ENCODE measurements at regions of chr12 and their contacts with region 1.

Region 1: GRCh38 chr12:93467351-93468007 is at the start of gene MRPL42:
- DNase-seq: peak; percentile 93
- ATAC-seq: peak; percentile 93
- H3K4me3 Mint-ChIP-seq: peak within 1 kb of the TSS; percentile 84
- H3K27ac Mint-ChIP-seq: peak within 1 kb of the TSS; percentile 87
- H3K4me1 Mint-ChIP-seq: peaks cover 25% of the 10 kb centered on the region
- H3K27me3 Mint-ChIP-seq: no peaks in the 10 kb centered on the region
- CTCF ChIP-seq: peak; percentile 68
- total RNA-seq, gene MRPL42: 85.6 to 87.6 TPM

Region 2: DNA sequence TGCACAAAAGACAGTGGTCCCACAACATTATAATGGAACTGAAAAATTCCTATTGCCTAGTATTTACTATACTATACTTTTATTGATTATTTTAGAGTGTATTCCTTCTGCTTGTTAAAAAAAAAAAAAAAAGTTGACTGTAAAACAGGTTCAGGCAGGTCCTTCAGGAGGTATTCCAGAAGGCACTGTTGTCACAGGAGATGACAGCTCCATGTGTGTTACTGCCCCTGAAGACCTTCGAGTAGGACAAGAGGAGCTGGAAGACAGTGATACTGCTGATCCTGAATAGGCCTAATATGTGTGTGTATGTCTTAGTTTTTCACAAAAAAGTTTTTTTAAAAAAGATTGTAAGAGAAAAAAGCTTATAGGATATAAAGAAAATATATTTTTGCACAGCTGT is 38.0 kb before region 1 on chr12:
- CTCF ChIA-PET with region 1: no interaction called
- POLR2A ChIA-PET with region 1: no interaction called
- intact Hi-C with region 1: no loop called
- DNase-seq: no peak
- ATAC-seq: no peak
- H3K4me3 Mint-ChIP-seq: no peak overlapping the region
- H3K27ac Mint-ChIP-seq: no peak overlapping the region
- H3K4me1 Mint-ChIP-seq: peaks cover 71% of the 10 kb centered on the region
- H3K27me3 Mint-ChIP-seq: no peaks in the 10 kb centered on the region
- CTCF ChIP-seq: no peak

Region 3: DNA sequence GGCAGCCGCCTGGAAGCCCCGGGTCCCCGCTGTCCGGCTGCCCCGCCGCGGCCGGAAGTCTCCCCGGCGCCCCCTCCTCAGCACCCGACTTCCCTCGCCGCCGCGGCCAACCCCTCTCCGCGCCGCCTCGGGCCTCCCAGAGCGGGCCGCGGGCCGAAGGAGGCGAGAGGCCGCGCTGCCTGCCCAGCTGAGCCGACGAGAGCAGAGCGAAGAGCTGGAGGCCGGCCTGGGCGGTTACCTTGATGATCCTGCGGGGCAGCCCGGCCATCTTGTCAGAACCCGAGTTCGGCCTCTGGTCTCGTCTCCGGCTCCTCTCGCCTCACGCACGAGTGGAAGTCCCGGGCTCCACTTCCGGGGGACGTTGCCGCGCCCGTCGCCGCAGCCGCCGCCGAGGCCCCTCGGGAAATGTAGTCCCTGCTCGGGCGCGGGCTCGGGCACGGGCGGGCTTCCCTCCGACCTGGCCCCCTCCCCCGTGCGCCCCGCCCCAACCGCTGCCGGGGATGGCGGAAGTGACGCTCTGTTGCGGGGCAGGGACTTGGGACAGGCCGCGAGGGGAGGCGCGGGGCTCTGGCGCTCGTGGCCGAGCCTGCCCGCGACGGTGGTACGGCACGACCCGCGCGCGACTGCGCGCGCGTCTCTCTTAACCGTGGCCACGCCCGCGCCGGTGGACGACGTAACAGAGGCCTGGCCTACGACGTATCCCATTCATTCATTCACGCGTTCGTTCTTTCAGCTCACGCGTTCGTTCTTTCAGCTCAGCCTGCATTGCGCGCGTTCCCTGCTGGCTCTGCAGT is 25.7 kb before region 1 on chr12 and contains the start of gene UBE2N:
- CTCF ChIA-PET with region 1: interaction called, 3 read pairs
- POLR2A ChIA-PET with region 1: interaction called, 15 read pairs
- intact Hi-C with region 1: no loop called
- DNase-seq: peak; percentile 96
- ATAC-seq: peak; percentile 86
- H3K4me3 Mint-ChIP-seq: peak within 1 kb of the TSS; percentile 99
- H3K27ac Mint-ChIP-seq: peak within 1 kb of the TSS; percentile 98
- H3K4me1 Mint-ChIP-seq: peaks cover 48% of the 10 kb centered on the region
- H3K27me3 Mint-ChIP-seq: no peaks in the 10 kb centered on the region
- CTCF ChIP-seq: no peak
- total RNA-seq, gene UBE2N: 186 to 192 TPM

Region 4: DNA sequence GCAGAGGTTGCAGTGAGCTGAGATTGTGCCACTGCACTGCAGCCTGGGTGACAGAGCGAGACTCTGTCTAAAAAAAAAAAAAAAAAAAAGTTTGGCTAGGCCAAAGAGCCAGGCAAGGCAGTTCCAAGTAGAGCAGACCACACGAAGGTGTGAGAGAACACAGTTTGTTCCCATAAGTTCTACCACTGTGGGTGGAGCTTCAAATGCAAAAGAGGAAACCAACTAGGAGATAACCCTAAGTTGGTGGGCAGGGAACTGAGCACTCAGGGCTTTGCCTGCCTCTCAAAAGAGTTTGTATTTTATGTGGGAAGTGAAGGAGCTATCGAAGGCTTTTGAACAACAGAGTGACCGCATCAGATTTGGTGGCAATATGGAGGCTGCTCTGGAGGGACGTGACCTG is 120.1 kb after region 1 on chr12:
- CTCF ChIA-PET with region 1: no interaction called
- POLR2A ChIA-PET with region 1: no interaction called
- intact Hi-C with region 1: no loop called
- DNase-seq: no peak
- ATAC-seq: peak; percentile 57
- H3K4me3 Mint-ChIP-seq: no peak overlapping the region
- H3K27ac Mint-ChIP-seq: no peak overlapping the region
- H3K4me1 Mint-ChIP-seq: peaks cover 9% of the 10 kb centered on the region
- H3K27me3 Mint-ChIP-seq: peaks cover 31% of the 10 kb centered on the region
- CTCF ChIP-seq: no peak

Measured in activated CD8-positive, alpha-beta T cell treated with anti-CD3 and anti-CD28 coated beads for 36 hours (primary cell).